ENCODE measurements at regions of chr4 and their contacts with region 1.

Region 1: GRCh38 chr4:163332500-163333406 is at the start of gene NPY1R:
- DNase-seq: peak; percentile 67
- ATAC-seq: peak; percentile 63
- H3K4me3 Mint-ChIP-seq: peak within 1 kb of the TSS; percentile 56
- H3K27ac Mint-ChIP-seq: no peak within 1 kb of the TSS
- H3K4me1 Mint-ChIP-seq: peaks cover 14% of the 10 kb centered on the region
- H3K27me3 Mint-ChIP-seq: peaks cover 40% of the 10 kb centered on the region
- total RNA-seq, gene NPY1R: not detected

Region 2: DNA sequence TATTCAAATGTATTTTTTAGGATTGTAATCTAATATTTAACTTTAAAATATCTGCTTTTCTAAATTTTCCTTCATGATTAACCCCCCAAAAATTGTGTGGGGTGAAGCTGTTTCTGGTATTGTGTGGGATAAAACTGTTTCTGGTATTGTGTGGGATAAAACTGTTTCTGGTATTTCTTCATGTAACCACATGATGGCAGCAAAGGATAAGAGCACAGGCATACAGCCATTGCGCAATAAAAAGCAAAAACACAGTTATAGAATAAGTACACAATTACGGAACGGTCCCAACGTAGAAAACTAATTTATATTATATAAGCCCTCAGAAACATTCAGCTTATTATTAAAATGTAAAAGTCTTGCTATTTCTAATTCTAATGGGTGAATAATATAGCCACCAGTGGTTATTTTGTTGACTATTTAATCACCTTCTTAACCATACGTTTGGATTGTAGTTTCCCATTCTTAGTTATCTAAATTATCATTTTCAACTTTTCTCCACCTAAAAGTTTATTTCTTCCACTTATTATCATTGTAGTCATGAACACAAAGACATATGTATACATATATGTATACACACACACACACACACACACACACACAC is 835.1 kb before region 1 on chr4:
- CTCF ChIA-PET with region 1: no interaction called
- POLR2A ChIA-PET with region 1: no interaction called
- intact Hi-C with region 1: loop called (anchors 1 kb)
- DNase-seq: peak; percentile 11
- ATAC-seq: no peak
- H3K4me3 Mint-ChIP-seq: no peak overlapping the region
- H3K27ac Mint-ChIP-seq: no peak overlapping the region
- H3K4me1 Mint-ChIP-seq: no peaks in the 10 kb centered on the region
- H3K27me3 Mint-ChIP-seq: peaks cover 1% of the 10 kb centered on the region

Region 3: DNA sequence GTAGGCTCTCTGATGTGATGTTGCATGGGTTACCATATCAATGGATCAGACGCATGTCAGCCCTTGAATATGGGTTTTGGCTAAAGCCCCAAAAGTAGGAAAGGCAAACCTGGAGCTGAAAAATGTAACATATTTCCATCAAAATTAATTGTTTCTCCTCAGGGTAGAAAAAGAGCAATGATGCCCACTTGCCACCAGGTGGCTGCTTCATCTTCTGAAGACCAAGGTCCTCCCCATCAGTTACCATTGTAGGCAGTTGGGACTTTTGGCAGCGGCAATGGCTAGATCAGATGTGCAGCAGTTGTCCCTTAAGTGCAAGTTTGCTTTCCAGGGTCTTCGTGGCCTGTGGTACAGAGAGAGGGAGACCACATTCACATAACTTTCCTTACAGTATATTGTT is 284.3 kb before region 1 on chr4:
- CTCF ChIA-PET with region 1: interaction called, 5 read pairs
- POLR2A ChIA-PET with region 1: no interaction called
- intact Hi-C with region 1: loop called in 1 of 2 experiments (anchors 2 kb)
- DNase-seq: peak; percentile 35
- ATAC-seq: no peak
- H3K4me3 Mint-ChIP-seq: no peak overlapping the region
- H3K27ac Mint-ChIP-seq: no peak overlapping the region
- H3K4me1 Mint-ChIP-seq: no peaks in the 10 kb centered on the region
- H3K27me3 Mint-ChIP-seq: peaks cover 4% of the 10 kb centered on the region

Region 4: DNA sequence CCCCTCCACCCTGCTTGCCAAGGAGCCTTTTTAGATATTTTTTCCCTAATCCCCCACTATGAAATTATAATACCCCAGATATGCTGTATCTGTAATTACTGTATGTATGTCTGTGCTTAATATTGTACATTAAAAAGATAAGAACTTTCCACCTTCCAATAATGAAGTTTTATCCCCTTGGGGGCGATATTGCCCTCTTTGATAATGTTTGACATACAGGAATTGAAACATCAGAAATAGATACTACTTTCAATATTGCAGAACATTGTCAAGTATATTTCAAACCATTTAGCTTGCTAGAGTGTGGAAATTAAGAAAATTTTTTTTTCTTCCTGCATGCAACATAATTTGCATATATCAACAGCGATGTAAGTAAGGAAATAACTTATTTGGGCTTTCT is 225.0 kb before region 1 on chr4:
- CTCF ChIA-PET with region 1: interaction called, 3 read pairs
- POLR2A ChIA-PET with region 1: no interaction called
- intact Hi-C with region 1: loop called (anchors 2 kb)
- DNase-seq: no peak
- ATAC-seq: no peak
- H3K4me3 Mint-ChIP-seq: no peak overlapping the region
- H3K27ac Mint-ChIP-seq: no peak overlapping the region
- H3K4me1 Mint-ChIP-seq: peaks cover 10% of the 10 kb centered on the region
- H3K27me3 Mint-ChIP-seq: no peaks in the 10 kb centered on the region

Region 5: GRCh38 chr4:163113921-163114713 is 218.6 kb before region 1 on chr4:
- CTCF ChIA-PET with region 1: interaction called, 3 read pairs
- POLR2A ChIA-PET with region 1: no interaction called
- intact Hi-C with region 1: loop called (anchors 2 kb)
- DNase-seq: no peak
- ATAC-seq: no peak
- H3K4me3 Mint-ChIP-seq: no peak overlapping the region
- H3K27ac Mint-ChIP-seq: no peak overlapping the region
- H3K4me1 Mint-ChIP-seq: peaks cover 10% of the 10 kb centered on the region
- H3K27me3 Mint-ChIP-seq: no peaks in the 10 kb centered on the region

Region 6: GRCh38 chr4:163166041-163166579 is 166.6 kb before region 1 on chr4:
- CTCF ChIA-PET with region 1: no interaction called
- POLR2A ChIA-PET with region 1: no interaction called
- intact Hi-C with region 1: loop called in 1 of 2 experiments (anchors 5 kb)
- DNase-seq: peak; percentile 73
- ATAC-seq: peak; percentile 65
- H3K4me3 Mint-ChIP-seq: peak overlapping the region; percentile 81
- H3K27ac Mint-ChIP-seq: peak overlapping the region; percentile 89
- H3K4me1 Mint-ChIP-seq: peaks cover 44% of the 10 kb centered on the region
- H3K27me3 Mint-ChIP-seq: no peaks in the 10 kb centered on the region

Region 7: GRCh38 chr4:163263606-163264005 is 69.1 kb before region 1 on chr4:
- CTCF ChIA-PET with region 1: no interaction called
- POLR2A ChIA-PET with region 1: no interaction called
- intact Hi-C with region 1: no loop called
- DNase-seq: no peak
- ATAC-seq: no peak
- H3K4me3 Mint-ChIP-seq: no peak overlapping the region
- H3K27ac Mint-ChIP-seq: no peak overlapping the region
- H3K4me1 Mint-ChIP-seq: no peaks in the 10 kb centered on the region
- H3K27me3 Mint-ChIP-seq: peaks cover 3% of the 10 kb centered on the region

Measured in activated CD4-positive, alpha-beta T cell treated with anti-CD3 and anti-CD28 coated beads for 36 hours (primary cell).